Activated T-helper 1 cell treated with anti-CD3 and anti-CD28 coated beads, Interleukin-12 subunit alpha, Interleukin-12 subunit beta, Interleukin-2, Interleukin-4 antibody, amounts not matched to agents 30 ng/mL and 10 ng/mL and 1 ng/mL, durations not matched to agents 14 hours and 24 hours and 36 hours (primary cell): ENCODE measurements at regions of chr7 and their contacts with region 1.

Region 1: GRCh38 chr7:37342688-37343471 is 105.8 kb downstream of the ELMO1 start:
- DNase-seq: peak; percentile 62
- H3K4me3 Mint-ChIP-seq: peak overlapping the region; percentile 96
- H3K27ac Mint-ChIP-seq: peak overlapping the region; percentile 99
- H3K4me1 Mint-ChIP-seq: peaks cover 76% of the 10 kb centered on the region
- H3K27me3 Mint-ChIP-seq: no peaks in the 10 kb centered on the region

Region 2: GRCh38 chr7:35816514-35816913 is 1526.4 kb before region 1 on chr7:
- intact Hi-C with region 1: loop called (anchors 5 kb)
- DNase-seq: no peak
- H3K4me3 Mint-ChIP-seq: no peak overlapping the region
- H3K27ac Mint-ChIP-seq: no peak overlapping the region
- H3K4me1 Mint-ChIP-seq: peaks cover 61% of the 10 kb centered on the region
- H3K27me3 Mint-ChIP-seq: no peaks in the 10 kb centered on the region

Region 3: DNA sequence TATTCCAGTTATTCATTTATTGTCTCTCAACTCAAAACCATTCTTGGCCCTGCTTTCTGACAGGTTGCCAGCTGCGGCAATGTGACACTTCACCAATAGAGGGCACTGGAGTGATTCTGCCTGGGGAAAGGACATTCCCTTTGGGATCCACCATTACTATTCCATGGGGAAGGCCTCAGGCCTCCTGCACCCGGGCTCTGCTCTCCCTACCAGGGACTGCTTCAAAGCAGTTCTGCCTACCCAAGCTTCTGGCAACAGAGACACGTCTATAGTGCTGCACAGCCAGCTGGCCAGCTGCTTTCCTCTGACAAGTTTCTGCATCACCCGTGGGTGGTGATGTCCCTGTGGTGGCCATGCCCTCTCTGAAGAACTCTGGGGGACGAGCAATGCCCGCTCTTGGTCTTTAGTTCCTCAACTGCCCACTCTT is 58.1 kb before region 1 on chr7:
- intact Hi-C with region 1: loop called (anchors 2 kb)
- DNase-seq: no peak
- H3K4me3 Mint-ChIP-seq: no peak overlapping the region
- H3K27ac Mint-ChIP-seq: no peak overlapping the region
- H3K4me1 Mint-ChIP-seq: peaks cover 48% of the 10 kb centered on the region
- H3K27me3 Mint-ChIP-seq: no peaks in the 10 kb centered on the region

Region 4: GRCh38 chr7:37327288-37327687 is 15.6 kb before region 1 on chr7:
- intact Hi-C with region 1: loop called (anchors 2 kb)
- DNase-seq: no peak
- H3K4me3 Mint-ChIP-seq: no peak overlapping the region
- H3K27ac Mint-ChIP-seq: peak overlapping the region; percentile 37
- H3K4me1 Mint-ChIP-seq: peaks cover 50% of the 10 kb centered on the region
- H3K27me3 Mint-ChIP-seq: no peaks in the 10 kb centered on the region

Region 5: DNA sequence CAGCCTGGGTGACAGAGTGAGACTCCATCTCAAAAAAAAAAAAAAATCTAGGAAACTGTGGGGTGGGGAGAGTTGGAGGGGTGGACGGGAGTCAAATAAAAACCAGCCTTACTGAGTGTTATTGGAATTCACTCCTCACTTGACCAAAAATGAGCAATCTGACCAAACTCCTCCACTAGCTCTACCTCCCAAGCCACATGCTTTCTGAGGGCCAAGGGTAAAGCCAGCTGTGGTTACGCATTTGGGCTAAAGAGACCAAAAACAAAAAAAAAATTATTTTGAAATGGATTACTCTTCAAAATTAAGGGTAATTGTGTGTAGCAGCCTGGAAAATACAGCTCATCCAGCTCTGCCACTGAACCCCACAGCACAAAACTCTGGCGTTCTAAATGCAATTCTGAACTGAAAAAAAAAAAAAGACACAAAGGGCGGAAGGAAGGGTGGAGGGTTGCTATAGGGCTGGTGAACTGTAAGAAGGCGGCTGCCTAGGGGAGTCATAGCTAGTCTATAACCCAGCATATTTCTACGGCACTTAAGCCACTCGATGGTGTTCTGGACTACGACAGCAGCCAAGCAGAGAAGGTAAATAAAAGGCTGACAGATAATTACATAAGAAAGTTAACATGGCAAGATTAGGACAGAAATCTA is 98.0 kb after region 1 on chr7:
- intact Hi-C with region 1: loop called (anchors 1 kb)
- DNase-seq: peak; percentile 27
- H3K4me3 Mint-ChIP-seq: peak overlapping the region; percentile 66
- H3K27ac Mint-ChIP-seq: peak overlapping the region; percentile 95
- H3K4me1 Mint-ChIP-seq: peaks cover 64% of the 10 kb centered on the region
- H3K27me3 Mint-ChIP-seq: no peaks in the 10 kb centered on the region